ENCODE measurements at regions of chr6 and their contacts with region 1.

Region 1: GRCh38 chr6:63802606-63803206 is 167.1 kb downstream of the PHF3 start:
- DNase-seq: peak in 1 of 2 experiments; percentile 29
- ATAC-seq: no peak
- H3K4me3 ChIP-seq: no peak overlapping the region
- H3K27ac ChIP-seq: no peak overlapping the region
- H3K4me1 ChIP-seq: peaks cover 26% of the 10 kb centered on the region
- CTCF ChIP-seq: peak; percentile 74
- EP300 ChIP-seq: no peak
- POLR2A ChIP-seq: no peak
- RAD21 ChIP-seq: peak; percentile 81 to 82

Region 2: DNA sequence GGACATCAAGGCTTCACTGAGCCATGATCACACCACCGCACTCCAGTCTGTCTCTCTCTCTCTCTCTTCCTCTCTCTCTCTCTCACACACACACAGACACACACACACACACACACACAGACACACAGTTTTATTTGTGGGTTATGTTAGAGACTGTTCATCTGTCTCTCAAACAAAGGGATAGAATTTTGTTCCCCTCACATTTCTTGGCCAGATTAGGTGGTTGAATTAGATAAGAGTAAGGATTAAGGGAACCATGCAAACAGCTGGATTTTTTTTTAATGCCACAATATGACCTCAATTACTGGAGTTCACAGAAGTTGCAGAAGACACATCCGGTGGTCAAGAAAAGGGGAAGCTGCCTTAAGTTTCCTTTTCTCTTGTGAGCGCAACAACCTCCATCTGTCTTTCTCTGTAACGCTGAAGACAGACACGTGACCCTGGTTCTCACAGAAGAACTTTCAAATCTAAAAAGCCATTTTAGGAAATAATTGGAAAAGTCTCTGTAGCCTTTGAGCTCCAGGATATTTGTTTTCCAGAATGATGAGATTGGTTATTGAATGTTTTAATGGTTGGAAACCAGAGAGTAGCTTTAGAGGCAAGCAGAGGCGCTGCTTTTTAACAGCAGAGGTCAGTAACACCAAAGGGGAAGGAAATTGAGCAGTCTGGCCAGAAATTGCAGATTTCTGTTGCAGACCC is 450.0 kb before region 1 on chr6:
- CTCF ChIA-PET with region 1: interaction called, 12 read pairs
- POLR2A ChIA-PET with region 1: no interaction called
- DNase-seq: peak in 1 of 2 experiments; percentile 57
- ATAC-seq: peak; percentile 83 to 89
- H3K4me3 ChIP-seq: no peak overlapping the region
- H3K27ac ChIP-seq: peak overlapping the region; percentile 31 to 79; a peak in 4 of 6 replicates
- H3K4me1 ChIP-seq: peaks cover 60% of the 10 kb centered on the region
- CTCF ChIP-seq: peak; percentile 60
- EP300 ChIP-seq: no peak
- POLR2A ChIP-seq: no peak
- RAD21 ChIP-seq: peak; percentile 83 to 94

Region 3: GRCh38 chr6:63997217-63997616 is 194.5 kb after region 1 on chr6:
- CTCF ChIA-PET with region 1: no interaction called
- POLR2A ChIA-PET with region 1: no interaction called
- DNase-seq: no peak
- ATAC-seq: no peak
- H3K4me3 ChIP-seq: no peak overlapping the region
- H3K27ac ChIP-seq: no peak overlapping the region
- H3K4me1 ChIP-seq: no peaks in the 10 kb centered on the region
- CTCF ChIP-seq: no peak
- EP300 ChIP-seq: no peak
- POLR2A ChIP-seq: no peak
- RAD21 ChIP-seq: no peak

Measured in A549 (cell line).